ENCODE measurements at regions of chr19 and their contacts with region 1.

Region 1: GRCh38 chr19:39474139-39474622 is 6.5 kb upstream of the TIMM50 start:
- DNase-seq: no peak
- H3K4me3 ChIP-seq: no peak overlapping the region
- CTCF ChIP-seq: peak; percentile 88

Region 2: GRCh38 chr19:39390755-39391592 is 83.2 kb before region 1 on chr19 and contains the starts of genes MED29 and PAF1:
- CTCF ChIA-PET with region 1: no interaction called
- POLR2A ChIA-PET with region 1: no interaction called
- DNase-seq: peak; percentile 97
- H3K4me3 ChIP-seq: peak within 1 kb of the TSS; percentile 99
- CTCF ChIP-seq: no peak

Region 3: DNA sequence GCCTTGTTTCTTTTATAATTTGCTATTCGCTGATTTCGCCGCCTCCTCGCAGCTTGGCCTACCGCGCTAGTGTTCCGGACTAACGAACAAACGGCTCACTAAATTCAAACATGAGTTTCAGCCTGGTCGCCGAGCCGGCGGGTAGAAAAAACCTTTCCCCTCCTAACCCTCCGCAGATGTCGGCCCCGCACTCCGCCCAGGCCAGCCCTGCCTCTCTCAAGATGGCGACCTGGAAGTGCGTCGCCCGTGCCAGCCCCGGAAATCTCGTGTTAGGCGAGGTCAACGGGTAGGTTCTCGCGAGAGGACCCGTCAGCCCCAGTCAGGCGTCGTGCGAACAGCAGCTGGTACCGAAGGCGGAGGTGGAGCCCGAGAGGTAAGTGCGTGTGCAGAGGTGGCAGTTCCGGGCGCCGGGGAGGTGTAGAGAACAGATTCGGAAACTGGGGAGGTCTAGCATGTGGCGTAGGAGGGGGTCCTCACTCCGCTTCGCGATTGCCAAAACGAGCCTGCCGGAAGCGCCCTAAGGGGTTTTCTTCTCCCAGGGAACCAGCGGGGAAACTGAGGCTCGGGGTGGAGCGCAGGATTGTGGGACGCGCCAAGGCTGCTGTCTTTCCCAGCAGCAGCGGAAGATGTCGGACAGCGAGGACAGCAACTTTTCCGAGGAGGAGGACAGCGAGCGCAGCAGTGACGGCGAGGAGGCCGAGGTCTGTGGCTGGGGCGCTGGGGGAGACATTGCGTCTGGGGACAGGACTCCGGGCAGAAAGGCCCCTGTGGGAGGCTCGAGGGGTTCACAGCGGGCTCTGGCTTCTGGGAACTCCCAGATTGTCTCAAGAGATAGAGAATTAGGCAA is 28.7 kb before region 1 on chr19 and contains the start of gene SUPT5H:
- CTCF ChIA-PET with region 1: interaction called, 17 read pairs
- POLR2A ChIA-PET with region 1: no interaction called
- DNase-seq: peak; percentile 82
- H3K4me3 ChIP-seq: peak within 1 kb of the TSS; percentile 99
- CTCF ChIP-seq: no peak

Region 4: GRCh38 chr19:39539519-39540332 is 65.5 kb after region 1 on chr19 and contains the start of gene EID2:
- CTCF ChIA-PET with region 1: interaction called, 66 read pairs
- POLR2A ChIA-PET with region 1: no interaction called
- DNase-seq: peak; percentile 49
- H3K4me3 ChIP-seq: peak within 1 kb of the TSS; percentile 97
- CTCF ChIP-seq: peak; percentile 88